A549 (cell line): ENCODE measurements at regions of chr13 and their contacts with region 1.

Region 1: DNA sequence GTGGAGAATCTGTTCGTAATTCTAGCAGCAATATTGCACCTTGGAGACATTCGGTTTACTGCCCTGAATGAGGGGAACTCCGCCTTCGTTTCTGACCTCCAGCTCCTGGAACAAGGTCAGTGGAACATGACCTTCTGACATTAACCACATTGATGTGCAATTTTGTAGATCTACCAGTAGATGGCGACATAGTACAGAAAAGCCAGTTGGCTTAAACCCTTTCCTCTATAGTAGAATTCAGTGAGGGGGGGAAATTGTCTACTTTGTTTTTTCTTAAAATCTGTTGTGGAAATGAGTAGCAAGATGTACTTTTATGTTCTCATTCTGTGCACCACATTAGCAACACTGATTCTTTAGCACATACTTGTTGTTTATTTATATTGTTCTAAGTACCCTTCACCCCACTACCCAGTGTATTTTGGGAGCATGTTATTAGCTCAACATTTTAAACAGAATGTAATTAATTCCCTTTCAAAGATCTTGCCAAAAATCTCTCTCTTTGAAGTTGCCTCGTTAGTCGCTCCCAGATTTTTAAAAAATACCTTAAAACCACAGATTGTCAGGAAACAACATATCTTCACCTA is 332.2 kb downstream of the MYO16 start:
- DNase-seq: peak; percentile 4 to 54
- ATAC-seq: peak; percentile 67 to 76; a peak in 4 of 6 replicates
- H3K4me3 ChIP-seq: no peak overlapping the region
- H3K27ac ChIP-seq: peak overlapping the region in 1 of 2 experiments; percentile 39; a peak in 1 of 6 replicates
- H3K4me1 ChIP-seq: peaks cover 14% of the 10 kb centered on the region; the same call in 2 of the 3 replicates
- CTCF ChIP-seq: peak; percentile 75
- EP300 ChIP-seq: no peak
- POLR2A ChIP-seq: no peak
- RAD21 ChIP-seq: peak; percentile 89 to 93

Region 2: DNA sequence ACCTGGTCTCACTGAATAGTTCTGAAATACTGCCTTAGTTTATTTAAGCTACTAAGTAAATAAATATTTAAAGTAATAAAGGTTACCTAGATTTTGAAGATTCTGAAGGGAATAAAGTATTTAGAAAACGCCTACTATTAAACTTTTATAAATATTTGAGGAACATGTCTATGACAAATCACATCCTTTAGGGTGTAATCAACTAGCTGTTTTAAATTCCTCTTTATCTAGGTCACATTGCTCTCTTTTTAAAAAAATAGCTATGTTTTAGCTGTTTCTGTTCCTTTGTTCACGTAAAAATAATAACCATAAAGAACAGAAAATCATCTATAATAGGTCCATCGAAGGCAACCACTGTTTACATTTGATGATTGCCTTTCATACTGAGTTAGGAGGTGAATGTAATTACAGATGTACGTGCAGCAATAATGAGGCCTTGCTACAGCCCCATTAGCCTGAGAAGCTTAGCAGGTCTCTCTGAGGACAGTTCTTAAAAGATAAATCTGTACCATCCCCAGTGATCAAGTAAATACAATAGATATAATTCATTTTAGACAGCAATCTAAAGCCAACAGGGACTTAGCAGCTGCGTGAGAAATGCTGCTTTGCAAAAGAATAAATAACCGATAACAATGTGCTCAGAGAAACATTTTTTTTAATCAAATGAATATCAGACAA is 1195.8 kb before region 1 on chr13:
- CTCF ChIA-PET with region 1: no interaction called
- POLR2A ChIA-PET with region 1: no interaction called
- DNase-seq: no peak
- ATAC-seq: no peak
- H3K4me3 ChIP-seq: no peak overlapping the region
- H3K27ac ChIP-seq: no peak overlapping the region
- H3K4me1 ChIP-seq: no peaks in the 10 kb centered on the region
- CTCF ChIP-seq: no peak
- EP300 ChIP-seq: no peak
- POLR2A ChIP-seq: no peak
- RAD21 ChIP-seq: no peak

Region 3: GRCh38 chr13:108915634-108916512 is 45.8 kb before region 1 on chr13:
- CTCF ChIA-PET with region 1: interaction called, 29 read pairs
- POLR2A ChIA-PET with region 1: no interaction called
- DNase-seq: peak; percentile 67 to 92
- ATAC-seq: peak; percentile 90 to 92
- H3K4me3 ChIP-seq: peak overlapping the region; percentile 19; the same call in 2 of the 3 replicates
- H3K27ac ChIP-seq: peak overlapping the region; percentile 80 to 86
- H3K4me1 ChIP-seq: peaks cover 38% of the 10 kb centered on the region
- CTCF ChIP-seq: no peak
- EP300 ChIP-seq: 0 out of 5 replicates have a peak, but pooled peaks of 1 of the 2 experiments have one; percentile 45
- POLR2A ChIP-seq: no peak
- RAD21 ChIP-seq: no peak

Region 4: GRCh38 chr13:109784221-109784894 is 822.7 kb after region 1 on chr13:
- CTCF ChIA-PET with region 1: interaction called, 15 read pairs
- POLR2A ChIA-PET with region 1: no interaction called
- DNase-seq: peak in 1 of 2 experiments; percentile 79
- ATAC-seq: peak; percentile 36 to 45
- H3K4me3 ChIP-seq: peak overlapping the region; percentile 89
- H3K27ac ChIP-seq: peak overlapping the region; percentile 89 to 98
- H3K4me1 ChIP-seq: peaks cover 14% of the 10 kb centered on the region; the same call in 2 of the 3 replicates
- CTCF ChIP-seq: peak; percentile 64
- EP300 ChIP-seq: no peak
- POLR2A ChIP-seq: no peak
- RAD21 ChIP-seq: peak; percentile 39 to 67; a peak in 4 of 5 replicates

Region 5: GRCh38 chr13:110108347-110109174 is 1146.9 kb after region 1 on chr13:
- CTCF ChIA-PET with region 1: interaction called, 14 read pairs
- POLR2A ChIA-PET with region 1: no interaction called
- DNase-seq: peak; percentile 77 to 84
- ATAC-seq: peak; percentile 98
- H3K4me3 ChIP-seq: no peak overlapping the region
- H3K27ac ChIP-seq: peak overlapping the region; percentile 52 to 65; a peak in 3 of 6 replicates
- H3K4me1 ChIP-seq: peaks cover 26% of the 10 kb centered on the region
- CTCF ChIP-seq: peak; percentile 66
- EP300 ChIP-seq: no peak
- POLR2A ChIP-seq: no peak
- RAD21 ChIP-seq: peak; percentile 95 to 97